ENCODE measurements at regions of chr21 and their contacts with region 1.

Region 1: DNA sequence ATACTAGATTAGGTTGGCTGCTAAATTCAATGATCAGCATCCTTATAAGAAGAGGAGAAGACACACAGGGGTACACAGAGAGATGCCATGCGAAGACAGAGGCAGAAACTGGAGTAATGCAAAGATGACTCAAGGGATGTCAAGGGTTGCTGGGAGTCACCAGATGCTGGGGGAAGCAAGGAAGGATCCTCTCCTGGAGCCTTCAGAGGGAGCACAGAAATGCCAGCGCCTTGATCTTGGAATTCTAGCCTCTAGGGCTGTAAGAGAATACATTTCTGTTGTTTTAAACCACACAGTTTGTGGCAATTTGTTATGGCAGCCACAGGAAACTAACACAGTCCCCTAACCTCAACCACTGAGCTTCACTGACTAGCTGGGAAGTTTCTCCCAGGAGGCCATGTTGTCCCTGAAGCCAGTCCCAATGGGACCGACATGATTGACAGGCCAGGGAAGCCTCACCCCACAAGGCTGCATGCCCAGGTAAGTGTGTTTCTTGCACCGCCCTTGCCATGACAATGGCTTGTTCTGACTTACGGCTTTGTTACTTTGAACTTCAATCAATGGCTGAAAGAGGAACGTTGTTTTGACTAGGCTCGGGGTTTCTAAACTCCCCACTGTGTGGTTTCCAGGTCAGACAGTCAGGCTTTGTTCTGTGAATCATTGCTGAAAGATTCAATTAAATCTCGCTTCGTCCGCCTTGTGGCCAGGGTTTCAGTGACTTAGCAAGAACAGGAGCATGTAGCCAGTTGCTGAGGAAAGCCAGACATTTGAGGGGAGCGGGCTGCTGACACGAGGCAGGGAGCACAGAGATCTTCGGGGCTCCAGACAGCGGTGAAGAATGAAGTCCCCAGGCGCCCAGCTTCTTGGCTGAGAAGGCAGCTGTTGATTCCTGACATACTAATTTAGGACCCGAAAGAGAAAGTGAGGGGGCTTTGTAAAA is 62.3 kb downstream of the RUNX1 start:
- DNase-seq: peak; percentile 70
- H3K4me3 Mint-ChIP-seq: peak overlapping the region; percentile 62
- H3K27ac Mint-ChIP-seq: peak overlapping the region; percentile 97
- H3K4me1 Mint-ChIP-seq: peaks cover 92% of the 10 kb centered on the region
- H3K27me3 Mint-ChIP-seq: no peaks in the 10 kb centered on the region

Region 2: DNA sequence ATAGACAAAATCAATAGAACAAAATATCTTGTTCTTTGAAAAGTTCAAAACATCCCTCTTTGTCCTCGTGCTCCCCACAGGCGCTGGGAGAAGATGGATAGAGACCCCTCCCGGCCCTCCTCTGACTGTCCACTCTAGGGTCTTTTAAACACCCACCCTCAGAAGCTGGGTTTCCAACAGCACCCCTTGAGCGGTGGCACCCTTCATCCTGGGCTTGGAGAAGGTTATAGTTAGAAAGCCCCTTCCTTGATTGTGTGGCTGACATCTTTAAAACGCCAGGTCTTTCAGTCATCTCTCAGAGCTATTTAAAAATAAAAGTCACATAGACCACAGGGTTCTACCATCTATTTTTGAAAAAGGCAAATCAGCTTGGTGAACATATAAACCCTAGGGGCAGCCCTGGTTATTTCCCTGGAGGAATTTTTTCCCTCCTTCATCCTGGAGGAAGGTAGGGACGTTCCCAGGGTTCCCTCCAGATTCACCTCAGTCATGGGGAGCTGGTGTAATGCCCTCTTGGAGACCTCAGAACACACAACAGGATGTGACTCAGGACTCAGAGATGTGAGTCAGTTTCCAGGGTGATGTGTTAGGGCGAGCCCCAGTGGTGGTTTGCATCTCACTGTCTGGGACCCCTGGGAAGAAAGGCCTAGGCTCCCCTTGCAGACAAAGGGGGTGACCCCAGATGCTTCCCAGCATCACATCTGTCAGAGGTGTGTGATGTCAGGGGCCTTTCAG is 179.5 kb before region 1 on chr21:
- intact Hi-C with region 1: loop called (anchors 2 kb)
- DNase-seq: peak; percentile 54
- H3K4me3 Mint-ChIP-seq: peak overlapping the region; percentile 56
- H3K27ac Mint-ChIP-seq: peak overlapping the region; percentile 93
- H3K4me1 Mint-ChIP-seq: peaks cover 92% of the 10 kb centered on the region
- H3K27me3 Mint-ChIP-seq: no peaks in the 10 kb centered on the region

Region 3: GRCh38 chr21:34974162-34974981 is 12.5 kb before region 1 on chr21:
- intact Hi-C with region 1: loop called (anchors 1 kb)
- DNase-seq: peak; percentile 65
- H3K4me3 Mint-ChIP-seq: peak overlapping the region; percentile 72
- H3K27ac Mint-ChIP-seq: peak overlapping the region; percentile 79
- H3K4me1 Mint-ChIP-seq: peaks cover 80% of the 10 kb centered on the region
- H3K27me3 Mint-ChIP-seq: peaks cover 12% of the 10 kb centered on the region

Region 4: GRCh38 chr21:35045542-35046262 is 58.9 kb after region 1 on chr21:
- intact Hi-C with region 1: loop called (anchors 1 kb)
- DNase-seq: peak; percentile 58
- H3K4me3 Mint-ChIP-seq: peak overlapping the region; percentile 93
- H3K27ac Mint-ChIP-seq: peak overlapping the region; percentile 98
- H3K4me1 Mint-ChIP-seq: peaks cover 95% of the 10 kb centered on the region
- H3K27me3 Mint-ChIP-seq: no peaks in the 10 kb centered on the region

Region 5: DNA sequence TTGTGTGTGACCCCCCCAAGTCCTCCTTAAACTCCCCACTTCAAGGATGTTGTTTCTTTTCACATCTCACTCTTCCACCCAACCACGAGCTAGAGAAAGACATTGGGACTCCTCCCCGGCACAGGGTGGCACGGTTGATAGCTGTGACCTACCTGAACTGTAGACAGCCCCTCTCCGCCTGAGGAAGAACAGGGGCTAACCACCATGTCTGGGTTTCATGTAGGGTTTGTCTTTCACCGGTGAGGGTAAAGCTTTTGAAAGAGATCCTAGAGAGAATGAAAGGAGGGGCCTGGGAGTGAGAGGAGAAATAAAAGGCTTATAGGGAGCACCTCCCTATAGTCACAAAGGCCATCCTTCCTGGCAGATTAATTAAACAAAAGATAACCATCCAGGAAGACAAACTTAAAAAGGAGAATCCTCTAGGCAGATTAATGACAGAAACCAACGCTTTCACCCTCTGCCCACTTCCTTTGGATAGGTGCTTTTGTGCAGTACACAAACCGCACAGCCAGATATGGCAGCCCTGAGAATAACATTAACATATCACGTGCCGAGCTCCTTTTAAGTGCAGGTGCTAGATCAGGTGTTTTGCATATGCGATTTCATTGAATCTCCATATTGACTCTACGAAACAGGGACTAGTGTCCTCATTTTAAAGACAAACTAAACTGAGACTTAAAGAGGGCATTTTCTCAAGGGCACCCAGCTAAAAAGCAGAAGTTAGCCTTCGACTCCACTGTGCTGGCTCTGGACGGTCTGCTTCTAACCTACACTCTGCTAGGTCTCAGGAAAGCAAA is 240.3 kb after region 1 on chr21:
- intact Hi-C with region 1: loop called (anchors 2 kb)
- DNase-seq: peak; percentile 42
- H3K4me3 Mint-ChIP-seq: peak overlapping the region; percentile 27
- H3K27ac Mint-ChIP-seq: peak overlapping the region; percentile 6
- H3K4me1 Mint-ChIP-seq: peaks cover 41% of the 10 kb centered on the region
- H3K27me3 Mint-ChIP-seq: peaks cover 10% of the 10 kb centered on the region

Region 6: DNA sequence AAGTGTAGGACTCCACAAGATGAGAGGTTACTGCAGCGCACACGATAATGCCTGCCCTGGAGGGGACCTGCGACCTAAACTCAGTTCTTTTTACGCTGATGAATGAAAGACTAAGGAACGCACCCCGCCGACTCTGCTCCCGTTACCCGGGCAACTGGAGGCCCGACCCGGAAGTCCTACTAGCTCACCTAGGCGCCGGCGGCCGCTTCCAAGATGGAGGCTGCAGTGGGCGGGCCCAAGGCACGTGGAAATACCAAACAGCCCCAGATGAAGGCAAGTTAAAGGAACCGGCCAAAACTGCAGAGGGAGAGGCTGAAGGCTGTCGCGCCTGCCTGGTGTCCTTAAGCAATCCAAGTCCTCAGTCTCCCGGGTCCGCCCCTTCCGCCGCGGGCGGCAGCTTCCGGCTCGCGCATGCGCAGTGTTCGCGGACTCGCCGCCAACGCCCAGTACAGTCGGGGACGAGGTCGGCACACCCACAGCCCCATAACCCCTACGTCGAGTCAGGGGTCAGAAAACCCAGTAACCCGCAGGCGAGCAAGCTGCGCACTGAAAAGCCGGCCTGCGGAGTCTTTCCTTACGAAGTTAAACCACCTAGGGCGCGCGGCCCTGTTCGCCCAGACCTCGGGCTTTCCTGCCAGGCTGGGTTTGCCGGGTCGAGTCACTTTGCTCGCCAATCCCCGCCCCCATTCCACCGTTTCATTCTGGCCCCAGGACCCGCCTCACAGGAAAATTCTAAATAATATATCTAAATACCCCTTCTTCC is 1073.5 kb after region 1 on chr21 and contains the start of gene SETD4:
- intact Hi-C with region 1: loop called (anchors 10 kb)
- DNase-seq: peak; percentile 91
- H3K4me3 Mint-ChIP-seq: peak within 1 kb of the TSS; percentile 93
- H3K27ac Mint-ChIP-seq: peak within 1 kb of the TSS; percentile 98
- H3K4me1 Mint-ChIP-seq: peaks cover 23% of the 10 kb centered on the region
- H3K27me3 Mint-ChIP-seq: peaks cover 3% of the 10 kb centered on the region
- total RNA-seq, gene SETD4: 21.9 and 22.0 TPM in 2 replicates